Heart left ventricle (tissue), 16 donors: ENCODE measurements at regions of chr2 and their contacts with region 1.

Region 1: GRCh38 chr2:179595284-179595683 is 266.1 kb downstream of the ZNF385B start:
- DNase-seq: no peak
- ATAC-seq: peak in 3 of 4 donors; percentile 62 to 75 (median 68)
- H3K4me3 ChIP-seq: no peak overlapping the region
- H3K27ac ChIP-seq: no peak overlapping the region
- H3K4me1 ChIP-seq: peaks cover 0 to 5% (median 0%) of the 10 kb centered on the region in 12 donors
- H3K27me3 ChIP-seq: no peaks in the 10 kb centered on the region
- CTCF ChIP-seq: peak in 4 of 12 donors; percentile 6 to 46 (median 25)
- POLR2A ChIP-seq: no peak

Region 2: GRCh38 chr2:179373816-179374215 is 221.5 kb before region 1 on chr2:
- intact Hi-C with region 1: no loop called
- DNase-seq: no peak
- ATAC-seq: no peak
- H3K4me3 ChIP-seq: no peak overlapping the region
- H3K27ac ChIP-seq: no peak overlapping the region
- H3K4me1 ChIP-seq: no peaks in the 10 kb centered on the region
- H3K27me3 ChIP-seq: peaks cover 0 to 3% (median 0%) of the 10 kb centered on the region in 9 donors
- CTCF ChIP-seq: no peak
- POLR2A ChIP-seq: no peak

Region 3: DNA sequence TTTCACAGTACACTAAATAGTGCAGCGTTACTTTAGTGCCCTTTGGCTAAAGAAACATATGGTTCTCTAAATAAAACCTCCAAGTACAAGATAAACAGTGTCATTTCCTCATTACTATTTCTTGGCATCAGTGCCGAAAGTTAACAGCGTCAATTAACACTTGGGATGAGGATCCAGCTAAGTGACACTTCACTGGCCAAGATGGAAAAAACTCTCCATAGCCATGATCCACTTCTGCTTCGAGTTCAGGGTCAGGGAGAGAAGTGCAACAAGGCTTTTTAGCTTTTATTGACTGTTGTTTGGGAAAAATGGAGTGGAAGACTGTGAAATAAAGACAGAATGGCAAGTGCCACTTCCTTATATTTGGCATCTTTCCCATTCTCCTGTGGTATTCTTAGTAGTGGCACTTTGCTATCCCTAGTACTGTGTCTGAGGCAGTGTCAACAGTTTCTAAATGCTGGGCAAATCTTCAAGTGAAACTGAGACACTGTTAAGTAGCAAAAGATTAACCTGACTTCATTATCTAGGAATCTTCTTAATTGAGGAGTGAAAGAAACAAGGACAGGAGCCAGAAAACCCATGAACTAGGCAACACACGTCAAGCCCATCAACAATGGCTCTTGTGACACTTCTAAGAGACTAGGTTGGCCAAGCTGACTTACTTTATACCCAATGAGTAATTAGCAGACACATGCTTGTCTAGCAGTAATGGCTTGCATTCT is 108.1 kb before region 1 on chr2:
- intact Hi-C with region 1: loop called in 1 of 10 experiments (anchors 1 kb)
- DNase-seq: no peak
- ATAC-seq: peak; percentile 82 to 88 (median 86)
- H3K4me3 ChIP-seq: no peak overlapping the region
- H3K27ac ChIP-seq: peak overlapping the region in 4 of 12 donors; percentile 30 to 67 (median 42)
- H3K4me1 ChIP-seq: peaks cover 0 to 14% (median 0%) of the 10 kb centered on the region in 12 donors
- H3K27me3 ChIP-seq: no peaks in the 10 kb centered on the region
- CTCF ChIP-seq: no peak
- POLR2A ChIP-seq: no peak

Region 4: GRCh38 chr2:179741317-179741716 is 146.0 kb after region 1 on chr2:
- intact Hi-C with region 1: loop called in 3 of 10 experiments (anchors 5 to 10 kb)
- DNase-seq: no peak
- ATAC-seq: no peak
- H3K4me3 ChIP-seq: no peak overlapping the region
- H3K27ac ChIP-seq: no peak overlapping the region
- H3K4me1 ChIP-seq: peaks cover 0 to 6% (median 0%) of the 10 kb centered on the region in 12 donors
- H3K27me3 ChIP-seq: peaks cover 0 to 5% (median 0%) of the 10 kb centered on the region in 9 donors
- CTCF ChIP-seq: no peak
- POLR2A ChIP-seq: no peak

Region 5: GRCh38 chr2:179751163-179751809 is 156.0 kb after region 1 on chr2:
- intact Hi-C with region 1: loop called in 2 of 10 experiments (anchors 10 kb)
- DNase-seq: no peak
- ATAC-seq: no peak
- H3K4me3 ChIP-seq: no peak overlapping the region
- H3K27ac ChIP-seq: no peak overlapping the region
- H3K4me1 ChIP-seq: no peaks in the 10 kb centered on the region
- H3K27me3 ChIP-seq: peaks cover 0 to 5% (median 0%) of the 10 kb centered on the region in 9 donors
- CTCF ChIP-seq: peak; percentile 37 to 73 (median 64)
- POLR2A ChIP-seq: no peak